CD8-positive, alpha-beta T cell (primary cell): ENCODE measurements at regions of chr16 and their contacts with region 1.

Region 1: GRCh38 chr16:10944249-10945064 is at the start of gene CLEC16A:
- DNase-seq: peak; percentile 91 to 98 (median 93)
- ATAC-seq: peak; percentile 70
- H3K4me3 ChIP-seq: peak within 1 kb of the TSS; percentile 66 to 76
- H3K4me3 Mint-ChIP-seq: peak within 1 kb of the TSS; percentile 93
- H3K27ac ChIP-seq: peak within 1 kb of the TSS; percentile 38 to 65
- H3K27ac Mint-ChIP-seq: peak within 1 kb of the TSS; percentile 82
- H3K4me1 ChIP-seq: peaks cover 60% of the 10 kb centered on the region
- H3K4me1 Mint-ChIP-seq: peaks cover 71% of the 10 kb centered on the region
- H3K27me3 ChIP-seq: no peaks in the 10 kb centered on the region
- H3K27me3 Mint-ChIP-seq: no peaks in the 10 kb centered on the region
- CTCF ChIP-seq: no peak
- total RNA-seq, gene CLEC16A: 20.5 to 21.9 TPM

Region 2: DNA sequence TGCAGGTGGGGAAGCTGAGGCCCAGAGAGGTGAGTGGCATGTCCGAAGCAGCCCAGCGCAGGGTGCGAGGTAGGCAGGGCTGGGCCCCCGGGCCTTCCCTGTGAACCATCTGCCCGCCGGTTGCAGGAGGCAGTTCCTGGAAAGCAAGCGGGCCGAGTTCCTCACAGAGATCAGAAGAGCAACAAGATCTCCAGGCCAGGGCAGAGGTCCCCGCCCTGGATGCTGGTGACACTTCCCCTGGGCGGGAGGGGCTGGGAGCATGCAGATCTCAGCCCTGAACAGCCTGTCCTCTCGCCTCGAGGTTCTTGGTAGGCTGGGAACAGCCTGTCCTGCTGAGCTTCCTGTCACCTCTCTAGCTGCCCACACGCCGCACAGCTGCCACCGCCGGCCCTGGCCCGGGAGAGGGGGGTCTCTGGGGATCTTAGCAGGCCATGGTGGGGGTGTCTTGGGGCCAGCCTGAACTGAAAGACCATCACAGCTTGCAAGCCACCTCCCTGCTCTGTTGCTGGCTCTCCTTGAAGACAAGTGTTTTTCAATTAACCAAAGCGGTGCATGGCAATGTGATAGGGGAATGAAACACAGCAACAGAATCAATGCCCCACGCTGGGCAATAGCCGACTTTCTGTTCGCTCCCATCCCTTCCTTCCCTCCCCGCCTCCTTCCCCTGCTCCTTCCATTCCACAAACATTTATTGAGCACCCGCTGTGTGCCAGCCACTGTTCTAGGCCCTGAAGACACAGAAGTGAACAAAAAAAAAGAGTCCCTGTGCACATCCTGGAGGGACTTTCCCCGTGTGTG is 279.8 kb after region 1 on chr16:
- CTCF ChIA-PET with region 1: no interaction called
- POLR2A ChIA-PET with region 1: interaction called, 3 read pairs
- intact Hi-C with region 1: loop called in 1 of 2 experiments (anchors 10 kb)
- DNase-seq: peak; percentile 17 to 79 (median 57)
- ATAC-seq: peak; percentile 37
- H3K4me3 ChIP-seq: peak overlapping the region in 1 of 2 experiments; percentile 27
- H3K4me3 Mint-ChIP-seq: peak overlapping the region; percentile 75
- H3K27ac ChIP-seq: peak overlapping the region; percentile 77 to 92
- H3K27ac Mint-ChIP-seq: peak overlapping the region; percentile 99
- H3K4me1 ChIP-seq: peaks cover 35% of the 10 kb centered on the region
- H3K4me1 Mint-ChIP-seq: peaks cover 40% of the 10 kb centered on the region
- H3K27me3 ChIP-seq: no peaks in the 10 kb centered on the region
- H3K27me3 Mint-ChIP-seq: no peaks in the 10 kb centered on the region
- CTCF ChIP-seq: no peak

Region 3: DNA sequence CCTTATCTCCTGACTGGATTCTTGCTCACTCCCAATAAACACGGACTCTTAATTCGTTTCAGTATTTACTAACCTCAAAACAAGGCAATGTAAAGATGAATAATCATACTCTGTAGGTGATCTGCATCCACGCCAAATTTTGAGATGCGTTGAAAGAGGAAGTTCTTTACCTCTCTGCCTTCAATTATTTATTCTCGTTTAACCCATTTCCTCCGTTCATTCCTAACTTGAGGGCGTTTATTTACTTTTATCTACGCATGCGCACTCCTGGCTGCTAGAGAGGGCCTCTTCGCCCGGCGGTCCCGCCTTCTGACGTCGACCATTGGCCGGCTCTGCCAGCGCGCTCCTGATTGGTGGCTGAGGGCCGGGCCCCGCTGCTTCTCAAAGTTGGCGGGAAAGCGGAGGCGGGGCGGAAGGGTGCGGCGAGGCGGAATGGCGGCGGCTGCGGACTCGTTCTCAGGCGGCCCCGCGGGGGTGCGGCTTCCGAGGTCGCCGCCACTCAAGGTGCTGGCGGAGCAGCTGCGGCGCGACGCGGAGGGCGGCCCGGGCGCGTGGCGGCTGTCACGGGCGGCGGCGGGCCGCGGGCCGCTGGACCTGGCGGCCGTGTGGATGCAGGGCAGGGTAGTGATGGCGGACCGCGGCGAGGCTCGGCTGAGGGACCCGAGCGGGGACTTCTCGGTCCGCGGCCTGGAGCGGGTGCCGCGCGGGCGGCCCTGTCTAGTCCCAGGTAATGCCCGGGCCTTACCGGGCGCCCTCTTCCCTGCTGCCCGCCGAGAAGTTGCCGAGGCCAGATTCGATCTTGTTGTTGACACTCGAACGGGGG is 400.8 kb after region 1 on chr16 and contains the start of gene RMI2:
- CTCF ChIA-PET with region 1: no interaction called
- POLR2A ChIA-PET with region 1: no interaction called
- intact Hi-C with region 1: loop called (anchors 1 kb)
- DNase-seq: peak; percentile 90 to 97 (median 95)
- ATAC-seq: peak; percentile 100
- H3K4me3 ChIP-seq: peak within 1 kb of the TSS; percentile 54 to 60
- H3K4me3 Mint-ChIP-seq: peak within 1 kb of the TSS; percentile 84
- H3K27ac ChIP-seq: no peak within 1 kb of the TSS
- H3K27ac Mint-ChIP-seq: peak within 1 kb of the TSS; percentile 83
- H3K4me1 ChIP-seq: no peaks in the 10 kb centered on the region
- H3K4me1 Mint-ChIP-seq: peaks cover 8% of the 10 kb centered on the region
- H3K27me3 ChIP-seq: no peaks in the 10 kb centered on the region
- H3K27me3 Mint-ChIP-seq: no peaks in the 10 kb centered on the region
- CTCF ChIP-seq: no peak
- total RNA-seq, gene RMI2: 0.69 to 0.73 TPM

Region 4: DNA sequence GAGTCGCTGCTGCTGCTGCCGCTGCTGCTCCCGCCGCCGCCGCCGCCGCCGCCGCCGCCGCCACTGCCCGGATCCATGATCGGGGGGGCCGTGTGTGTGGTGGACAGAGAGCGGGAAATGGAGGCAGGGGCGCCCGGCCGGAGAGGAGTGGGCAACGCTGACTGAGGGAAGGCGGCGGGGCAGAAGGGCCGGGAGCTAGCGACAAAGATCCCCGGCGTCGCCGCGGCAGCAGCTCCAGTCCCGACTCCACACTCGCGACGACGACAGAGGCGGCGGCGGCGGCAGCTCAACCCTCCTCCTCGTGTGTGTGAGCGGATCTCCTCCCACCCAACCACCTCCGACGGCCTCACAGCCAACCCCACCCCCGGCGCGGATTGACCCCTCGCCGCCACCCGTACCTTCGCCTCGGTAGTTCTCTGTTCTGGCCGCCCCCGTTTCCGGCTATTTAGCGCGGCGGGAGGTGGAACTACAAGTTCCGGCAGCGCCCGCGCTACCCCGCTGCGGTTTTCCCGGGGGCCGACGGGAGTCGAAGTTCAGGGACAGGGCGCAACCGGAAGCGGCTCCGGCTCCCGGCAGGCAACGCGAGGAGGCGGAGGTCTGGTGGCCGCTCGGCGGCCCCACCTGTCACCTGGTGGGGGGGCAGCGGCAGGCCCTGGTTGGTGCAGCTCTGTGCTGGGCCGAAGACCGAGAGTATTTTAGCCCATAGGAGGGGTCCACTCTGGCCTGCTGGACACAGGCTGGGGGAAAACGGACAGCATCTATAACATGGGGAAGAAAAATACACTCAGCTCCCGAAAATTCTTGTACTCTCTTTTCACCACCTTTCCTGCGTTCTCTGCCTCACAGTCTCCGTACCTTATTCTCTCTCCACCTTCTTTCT is 971.4 kb after region 1 on chr16 and contains the start of gene GSPT1:
- CTCF ChIA-PET with region 1: no interaction called
- POLR2A ChIA-PET with region 1: no interaction called
- intact Hi-C with region 1: loop called in 1 of 2 experiments (anchors 1 kb)
- DNase-seq: peak; percentile 98 to 100 (median 99)
- ATAC-seq: peak; percentile 89
- H3K4me3 ChIP-seq: peak within 1 kb of the TSS; percentile 52 to 68
- H3K4me3 Mint-ChIP-seq: peak within 1 kb of the TSS; percentile 94
- H3K27ac ChIP-seq: peak within 1 kb of the TSS; percentile 68 to 75
- H3K27ac Mint-ChIP-seq: peak within 1 kb of the TSS; percentile 98
- H3K4me1 ChIP-seq: peaks cover 24% of the 10 kb centered on the region
- H3K4me1 Mint-ChIP-seq: peaks cover 29% of the 10 kb centered on the region
- H3K27me3 ChIP-seq: no peaks in the 10 kb centered on the region
- H3K27me3 Mint-ChIP-seq: no peaks in the 10 kb centered on the region
- CTCF ChIP-seq: no peak
- total RNA-seq, gene GSPT1: 296 to 297 TPM

Region 5: DNA sequence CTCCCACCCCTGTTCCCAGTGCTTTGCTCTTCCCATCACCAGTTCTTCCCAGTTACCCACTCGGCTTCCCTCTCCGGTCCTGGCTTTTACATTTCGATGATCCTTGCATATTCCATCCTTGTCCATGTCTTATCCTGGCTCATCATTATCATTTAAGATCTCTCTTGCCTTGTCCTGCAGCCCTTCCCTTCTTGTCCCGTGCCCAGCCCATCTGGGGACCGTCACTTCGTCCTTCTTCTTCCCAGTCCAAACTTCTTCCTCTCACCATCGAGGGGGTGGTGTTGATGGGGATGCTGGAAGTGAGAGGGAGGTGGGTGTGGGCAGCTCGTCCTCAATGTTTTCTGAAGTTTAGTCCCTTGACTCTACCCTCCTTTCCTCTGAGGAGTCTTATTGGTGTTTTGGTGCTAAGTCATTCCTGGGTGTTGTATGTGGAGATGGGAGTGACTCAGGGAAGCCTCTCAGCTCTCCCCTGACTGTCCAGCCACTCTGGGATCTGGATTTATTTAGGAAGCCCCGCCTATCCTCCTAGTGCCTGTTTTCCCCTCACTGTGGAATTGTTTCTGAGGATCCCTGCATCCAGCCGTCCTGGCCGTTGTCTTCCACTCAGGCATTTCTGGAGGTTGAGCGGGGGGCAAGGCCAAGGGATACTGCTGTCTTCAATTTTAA is 1033.1 kb after region 1 on chr16:
- CTCF ChIA-PET with region 1: no interaction called
- POLR2A ChIA-PET with region 1: no interaction called
- intact Hi-C with region 1: loop called (anchors 5 kb)
- DNase-seq: no peak
- ATAC-seq: no peak
- H3K4me3 ChIP-seq: peak overlapping the region; percentile 65 to 81
- H3K4me3 Mint-ChIP-seq: peak overlapping the region; percentile 91
- H3K27ac ChIP-seq: no peak overlapping the region
- H3K27ac Mint-ChIP-seq: peak overlapping the region; percentile 89
- H3K4me1 ChIP-seq: peaks cover 16% of the 10 kb centered on the region
- H3K4me1 Mint-ChIP-seq: peaks cover 42% of the 10 kb centered on the region
- H3K27me3 ChIP-seq: no peaks in the 10 kb centered on the region
- H3K27me3 Mint-ChIP-seq: no peaks in the 10 kb centered on the region
- CTCF ChIP-seq: no peak

Region 6: DNA sequence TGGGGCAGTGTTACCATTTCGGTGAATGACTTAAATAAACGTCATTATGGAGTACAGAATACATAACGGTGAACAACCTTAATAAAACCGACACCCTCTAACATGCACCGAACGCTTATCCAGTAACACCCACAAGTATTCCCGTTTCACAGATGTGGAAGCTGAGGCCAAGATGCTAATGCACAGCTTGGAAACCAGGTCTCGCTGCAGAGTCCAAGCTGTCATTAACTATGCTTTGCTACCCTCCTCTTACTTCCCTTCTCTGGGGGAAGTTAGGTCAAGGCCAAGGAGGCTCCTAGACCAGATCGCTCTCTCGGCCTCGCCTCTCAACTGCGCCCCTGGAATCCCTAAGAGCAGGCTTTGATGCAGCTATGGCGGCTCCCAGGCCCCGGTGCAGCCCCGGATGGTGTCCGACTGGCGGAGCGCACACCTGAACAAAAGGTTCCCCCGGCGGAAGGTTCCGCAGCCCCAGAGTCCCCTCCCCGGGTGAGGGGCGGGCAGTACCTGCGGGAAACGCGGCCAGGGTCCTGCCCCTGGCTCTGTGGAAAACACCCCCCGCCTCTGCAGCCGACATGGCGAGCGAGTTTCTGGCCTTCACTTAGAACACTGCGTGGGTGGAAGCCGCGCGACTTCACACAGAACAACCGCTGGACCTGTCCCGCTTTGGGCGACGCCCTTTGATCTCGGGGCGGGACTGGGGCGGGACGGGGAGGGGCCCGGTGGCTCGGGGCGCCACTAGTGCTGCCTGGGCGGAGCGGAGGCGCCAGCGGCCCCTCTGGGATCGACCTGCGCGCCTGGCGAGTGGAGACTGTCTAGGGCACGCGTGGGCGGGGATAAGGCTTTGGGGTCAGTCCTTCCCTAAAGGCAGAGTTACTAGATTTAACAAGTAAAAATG is 1859.0 kb after region 1 on chr16 and contains the start of gene CPPED1:
- CTCF ChIA-PET with region 1: no interaction called
- POLR2A ChIA-PET with region 1: no interaction called
- intact Hi-C with region 1: loop called (anchors 2 to 5 kb)
- DNase-seq: peak; percentile 83 to 95 (median 88)
- ATAC-seq: peak; percentile 94
- H3K4me3 ChIP-seq: peak within 1 kb of the TSS; percentile 71 to 86
- H3K4me3 Mint-ChIP-seq: peak within 1 kb of the TSS; percentile 88
- H3K27ac ChIP-seq: peak within 1 kb of the TSS; percentile 55 to 87
- H3K27ac Mint-ChIP-seq: peak within 1 kb of the TSS; percentile 92
- H3K4me1 ChIP-seq: peaks cover 9% of the 10 kb centered on the region
- H3K4me1 Mint-ChIP-seq: peaks cover 22% of the 10 kb centered on the region
- H3K27me3 ChIP-seq: no peaks in the 10 kb centered on the region
- H3K27me3 Mint-ChIP-seq: peaks cover 3% of the 10 kb centered on the region
- CTCF ChIP-seq: no peak
- total RNA-seq, gene CPPED1: 0.89 to 1.1 TPM